Activated CD4-positive, alpha-beta T cell treated with anti-CD3 and anti-CD28 coated beads, Interleukin-2, amount 10 ng/mL, durations not matched to agents 24 days and 14 days (primary cell): ENCODE measurements at regions of chr5 and their contacts with region 1.

Region 1: DNA sequence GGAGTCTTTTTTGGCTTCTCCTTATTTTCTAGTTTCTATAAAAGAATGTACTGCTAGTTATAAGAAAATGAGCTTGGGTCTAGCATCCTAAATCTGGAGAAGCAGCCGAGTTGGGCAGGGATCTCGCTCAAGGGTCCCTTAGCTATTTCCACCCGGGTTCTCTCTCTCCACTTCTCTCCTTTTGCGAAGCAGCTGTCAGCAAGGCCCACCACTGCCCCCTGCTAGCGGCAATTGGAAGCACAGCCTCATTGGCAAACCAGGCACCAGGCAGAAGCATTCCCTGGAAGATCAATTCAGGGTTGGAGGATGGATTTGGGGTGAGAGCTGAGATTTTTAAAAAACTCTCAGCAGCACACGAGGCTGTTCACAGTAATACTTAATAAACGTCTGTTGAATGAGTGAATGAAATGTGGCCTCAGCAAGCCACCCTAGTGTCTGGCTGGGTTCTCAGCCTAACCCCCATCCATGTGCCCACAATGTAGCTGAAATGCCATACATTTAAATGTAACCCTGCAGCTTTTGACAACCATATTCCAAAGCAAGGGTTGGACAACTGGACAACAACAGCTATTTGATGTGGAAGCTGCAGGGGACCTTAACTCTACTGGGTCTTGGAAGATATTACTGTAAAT is 34.6 kb upstream of the TNIP1 start:
- DNase-seq: peak; percentile 92
- H3K4me3 Mint-ChIP-seq: no peak overlapping the region
- H3K27ac Mint-ChIP-seq: no peak overlapping the region
- H3K4me1 Mint-ChIP-seq: peaks cover 8% of the 10 kb centered on the region
- H3K27me3 Mint-ChIP-seq: no peaks in the 10 kb centered on the region

Region 2: DNA sequence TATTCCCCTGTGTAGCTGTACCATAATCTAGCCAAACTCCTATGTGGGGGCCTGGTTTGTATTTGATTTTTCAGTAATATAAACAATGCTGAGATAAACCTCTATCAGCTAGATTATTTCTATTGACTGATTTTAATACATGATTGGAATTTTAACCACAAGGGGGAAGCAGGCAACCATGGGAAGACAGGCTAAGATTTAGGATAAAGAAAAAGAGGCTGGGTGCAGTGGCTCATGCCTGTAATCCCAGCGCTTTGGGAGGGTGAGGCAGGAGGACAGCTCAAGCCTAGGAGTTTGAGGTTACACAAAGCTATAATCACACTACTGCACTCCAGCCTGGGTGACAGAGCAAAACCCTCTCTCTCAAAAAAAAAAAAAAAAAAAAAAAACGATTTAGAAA is 113.1 kb before region 1 on chr5:
- intact Hi-C with region 1: loop called (anchors 1 kb)
- DNase-seq: no peak
- H3K4me3 Mint-ChIP-seq: no peak overlapping the region
- H3K27ac Mint-ChIP-seq: no peak overlapping the region
- H3K4me1 Mint-ChIP-seq: no peaks in the 10 kb centered on the region
- H3K27me3 Mint-ChIP-seq: peaks cover 4% of the 10 kb centered on the region

Region 3: GRCh38 chr5:151051066-151051930 is 64.1 kb before region 1 on chr5:
- intact Hi-C with region 1: loop called (anchors 1 kb)
- DNase-seq: peak; percentile 89
- H3K4me3 Mint-ChIP-seq: no peak overlapping the region
- H3K27ac Mint-ChIP-seq: peak overlapping the region; percentile 46
- H3K4me1 Mint-ChIP-seq: peaks cover 9% of the 10 kb centered on the region
- H3K27me3 Mint-ChIP-seq: no peaks in the 10 kb centered on the region

Region 4: DNA sequence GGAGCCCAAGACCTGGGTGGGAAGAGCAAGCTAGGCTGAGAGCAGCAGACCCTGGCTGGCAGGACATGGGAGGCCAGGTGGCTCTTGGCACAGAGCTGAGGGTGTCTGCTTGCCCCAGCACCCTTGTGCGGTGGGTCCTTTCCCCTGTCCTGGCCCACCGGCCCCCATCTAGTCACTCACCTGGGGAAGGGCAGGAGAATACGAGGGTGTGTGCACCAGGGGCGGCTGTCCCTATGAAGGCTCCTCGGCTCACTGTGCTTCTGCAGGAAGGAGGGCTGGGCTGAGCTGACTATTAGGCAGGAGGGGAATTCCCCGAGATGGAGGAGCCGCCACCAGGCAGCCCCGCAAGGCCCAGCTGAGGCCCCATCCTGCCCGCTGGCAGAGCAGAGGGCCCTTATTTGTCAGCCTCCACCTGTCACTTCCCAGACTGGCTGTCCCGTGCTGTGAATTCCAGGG is 28.5 kb before region 1 on chr5:
- intact Hi-C with region 1: loop called (anchors 2 kb)
- DNase-seq: peak; percentile 90
- H3K4me3 Mint-ChIP-seq: peak overlapping the region; percentile 86
- H3K27ac Mint-ChIP-seq: peak overlapping the region; percentile 79
- H3K4me1 Mint-ChIP-seq: peaks cover 64% of the 10 kb centered on the region
- H3K27me3 Mint-ChIP-seq: no peaks in the 10 kb centered on the region

Region 5: GRCh38 chr5:151094054-151094851 is 21.1 kb before region 1 on chr5:
- intact Hi-C with region 1: loop called (anchors 2 kb)
- DNase-seq: peak; percentile 88
- H3K4me3 Mint-ChIP-seq: peak overlapping the region; percentile 74
- H3K27ac Mint-ChIP-seq: peak overlapping the region; percentile 90
- H3K4me1 Mint-ChIP-seq: peaks cover 63% of the 10 kb centered on the region
- H3K27me3 Mint-ChIP-seq: no peaks in the 10 kb centered on the region